Activated T-helper 1 cell treated with anti-CD3 and anti-CD28 coated beads, Interleukin-12 subunit alpha, Interleukin-12 subunit beta, Interleukin-2, Interleukin-4 antibody, amounts not matched to agents 30 ng/mL and 10 ng/mL and 1 ng/mL, durations not matched to agents 14 hours and 24 hours and 36 hours (primary cell): ENCODE measurements at regions of chr3 and their contacts with region 1.

Region 1: DNA sequence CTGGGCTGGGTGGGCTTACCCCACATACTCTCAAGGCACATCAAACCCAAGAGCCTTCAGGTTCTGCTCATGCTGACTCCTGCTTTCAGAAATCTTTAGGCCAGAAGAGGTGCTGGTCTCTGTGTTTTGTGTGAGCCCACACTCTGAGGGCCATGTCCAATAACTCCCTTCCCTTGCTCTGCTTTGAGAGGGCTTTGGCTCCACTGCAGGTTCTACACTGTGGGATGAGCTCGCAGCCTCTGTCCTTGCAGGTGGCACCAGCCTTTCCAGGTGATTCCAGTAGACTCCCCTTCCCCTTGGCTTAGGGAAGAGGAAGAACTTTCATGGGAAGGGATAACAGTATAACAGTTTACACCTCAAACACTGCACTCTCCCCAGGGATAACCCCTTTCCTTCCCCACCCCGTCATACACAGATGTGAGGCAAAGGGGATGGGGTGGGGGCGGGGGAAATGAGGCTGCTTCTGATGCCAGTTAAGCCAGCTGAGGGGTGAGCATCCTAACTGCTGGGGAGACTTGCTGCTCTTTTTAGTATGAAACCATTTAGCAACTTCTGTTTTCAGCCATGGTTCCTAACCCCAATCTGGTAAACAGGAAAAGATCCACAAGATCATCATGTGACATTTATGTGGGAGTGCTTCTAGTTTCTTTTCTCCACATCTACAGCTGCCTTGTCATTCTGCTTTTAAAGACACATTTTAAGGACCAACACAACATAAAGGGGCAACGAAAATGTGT is 262.4 kb downstream of the SLC9A9 start:
- DNase-seq: no peak
- H3K4me3 Mint-ChIP-seq: no peak overlapping the region
- H3K27ac Mint-ChIP-seq: peak overlapping the region; percentile 20
- H3K4me1 Mint-ChIP-seq: peaks cover 21% of the 10 kb centered on the region
- H3K27me3 Mint-ChIP-seq: no peaks in the 10 kb centered on the region

Region 2: DNA sequence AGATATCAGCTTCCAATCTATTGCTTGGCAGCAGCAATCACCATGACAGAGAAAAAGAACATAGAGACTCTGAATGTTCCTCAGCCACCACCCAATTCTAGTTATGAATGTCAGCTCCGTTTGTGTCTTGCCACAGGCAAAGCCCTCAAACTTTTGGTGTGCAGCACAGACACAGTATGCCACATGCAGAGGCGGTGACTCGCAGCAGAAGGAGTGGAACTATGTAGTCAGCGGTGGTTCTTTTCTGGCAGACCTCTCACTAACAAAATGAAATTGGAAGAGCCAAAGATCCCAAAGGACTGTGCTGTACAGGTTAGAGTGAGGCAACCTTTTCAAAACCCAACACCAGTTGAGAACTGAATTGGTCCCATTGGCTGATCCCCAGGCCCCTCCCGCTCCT is 41.4 kb after region 1 on chr3:
- intact Hi-C with region 1: loop called (anchors 1 kb)
- DNase-seq: no peak
- H3K4me3 Mint-ChIP-seq: no peak overlapping the region
- H3K27ac Mint-ChIP-seq: no peak overlapping the region
- H3K4me1 Mint-ChIP-seq: no peaks in the 10 kb centered on the region
- H3K27me3 Mint-ChIP-seq: no peaks in the 10 kb centered on the region

Region 3: GRCh38 chr3:144457758-144458157 is 871.9 kb after region 1 on chr3:
- intact Hi-C with region 1: no loop called
- DNase-seq: no peak
- H3K4me3 Mint-ChIP-seq: no peak overlapping the region
- H3K27ac Mint-ChIP-seq: no peak overlapping the region
- H3K4me1 Mint-ChIP-seq: no peaks in the 10 kb centered on the region
- H3K27me3 Mint-ChIP-seq: no peaks in the 10 kb centered on the region